CD4-positive, alpha-beta T cell (primary cell): ENCODE measurements at regions of chr22 and their contacts with region 1.

Region 1: DNA sequence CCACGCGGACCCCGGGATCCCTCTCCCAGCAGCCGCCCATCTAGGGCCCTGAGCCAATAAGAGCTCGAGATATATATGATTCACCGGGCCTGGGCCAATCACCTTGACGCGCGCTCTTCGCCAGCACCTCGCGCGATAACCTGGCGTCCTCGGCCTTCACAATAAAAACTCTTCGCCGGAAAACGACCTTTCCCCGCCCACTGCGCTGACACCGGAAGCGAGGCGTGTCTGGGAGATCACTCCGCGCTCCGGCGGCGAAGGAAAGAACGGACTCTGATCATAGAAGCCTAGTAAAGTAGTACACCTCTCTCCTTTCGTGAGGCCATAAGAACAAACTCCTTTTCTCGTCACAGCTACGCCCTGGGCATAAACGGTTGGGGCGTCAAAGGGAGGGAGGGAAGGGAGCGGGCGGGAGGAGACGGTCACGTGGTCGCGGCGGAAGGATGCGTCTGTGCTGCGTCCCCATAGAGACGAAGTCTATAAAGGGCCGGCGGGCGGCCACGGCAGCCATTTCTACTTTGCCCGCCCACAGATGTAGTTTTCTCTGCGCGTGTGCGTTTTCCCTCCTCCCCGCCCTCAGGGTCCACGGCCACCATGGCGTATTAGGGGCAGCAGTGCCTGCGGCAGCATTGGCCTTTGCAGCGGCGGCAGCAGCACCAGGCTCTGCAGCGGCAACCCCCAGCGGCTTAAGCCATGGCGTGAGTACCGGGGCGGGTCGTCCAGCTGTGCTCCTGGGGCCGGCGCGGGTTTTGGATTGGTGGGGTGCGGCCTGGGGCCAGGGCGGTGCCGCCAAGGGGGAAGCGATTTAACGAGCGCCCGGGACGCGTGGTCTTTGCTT is at the start of gene ATF4:
- DNase-seq: peak; percentile 93 to 99 (median 94)
- ATAC-seq: peak; percentile 91
- H3K4me3 ChIP-seq: peak within 1 kb of the TSS; percentile 100
- H3K4me3 Mint-ChIP-seq: peak within 1 kb of the TSS; percentile 97
- H3K27ac ChIP-seq: peak within 1 kb of the TSS; percentile 92 to 95
- H3K27ac Mint-ChIP-seq: peak within 1 kb of the TSS; percentile 98
- H3K4me1 ChIP-seq: peaks cover 52% of the 10 kb centered on the region
- H3K4me1 Mint-ChIP-seq: peaks cover 57% of the 10 kb centered on the region
- H3K27me3 ChIP-seq: no peaks in the 10 kb centered on the region
- H3K27me3 Mint-ChIP-seq: peaks cover 5% of the 10 kb centered on the region
- CTCF ChIP-seq: no peak
- total RNA-seq, gene ATF4: 358 to 365 TPM

Region 2: DNA sequence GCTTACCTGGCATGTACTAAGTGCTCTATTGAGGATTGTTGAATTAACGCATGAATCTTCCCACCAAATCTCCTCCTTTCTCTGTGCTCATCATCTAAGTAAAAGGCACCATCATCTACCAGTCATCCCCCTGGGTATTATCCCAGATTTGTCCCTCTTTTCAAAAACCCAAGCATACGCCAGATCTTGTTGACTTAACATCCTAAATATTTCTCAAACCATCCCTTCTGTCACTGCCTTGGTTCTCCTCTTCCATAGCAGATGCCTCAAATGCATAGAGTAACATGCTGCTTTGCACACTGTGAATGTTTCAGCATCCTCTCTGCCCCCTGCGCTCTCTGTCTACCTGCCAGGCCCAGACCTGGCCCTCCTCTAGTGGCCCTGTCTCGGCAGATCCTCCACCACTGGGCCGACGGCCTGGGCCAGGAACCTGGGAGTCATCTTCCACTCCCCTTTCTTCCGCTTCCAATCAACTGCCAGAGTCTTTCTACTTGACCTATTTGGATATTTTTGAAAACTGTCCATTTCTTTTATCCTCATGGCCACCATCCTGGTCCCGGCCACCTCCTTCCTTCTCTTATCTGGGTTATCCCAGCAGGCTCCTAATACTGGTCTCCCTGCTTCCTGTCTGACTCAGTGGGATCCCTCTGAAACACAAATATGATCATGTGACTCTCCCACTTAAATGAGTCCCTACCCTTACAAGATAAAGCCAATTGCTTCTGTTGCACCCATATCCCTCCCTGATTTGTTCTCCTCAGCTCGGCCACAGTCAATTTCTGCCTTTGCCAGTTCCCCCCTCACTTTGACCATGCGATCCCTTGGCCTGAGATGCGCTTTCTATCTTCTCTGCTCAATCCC is 124.1 kb before region 1 on chr22:
- CTCF ChIA-PET with region 1: no interaction called
- POLR2A ChIA-PET with region 1: interaction called, 12 read pairs
- intact Hi-C with region 1: loop called in 1 of 2 experiments (anchors 2 kb)
- DNase-seq: no peak
- ATAC-seq: no peak
- H3K4me3 ChIP-seq: no peak overlapping the region
- H3K4me3 Mint-ChIP-seq: peak overlapping the region; percentile 17
- H3K27ac ChIP-seq: no peak overlapping the region
- H3K27ac Mint-ChIP-seq: no peak overlapping the region
- H3K4me1 ChIP-seq: peaks cover 19% of the 10 kb centered on the region
- H3K4me1 Mint-ChIP-seq: peaks cover 18% of the 10 kb centered on the region
- H3K27me3 ChIP-seq: no peaks in the 10 kb centered on the region
- H3K27me3 Mint-ChIP-seq: no peaks in the 10 kb centered on the region
- CTCF ChIP-seq: no peak

Region 3: GRCh38 chr22:39414886-39415285 is 105.4 kb before region 1 on chr22:
- CTCF ChIA-PET with region 1: no interaction called
- POLR2A ChIA-PET with region 1: interaction called, 14 read pairs
- intact Hi-C with region 1: no loop called
- DNase-seq: no peak
- ATAC-seq: no peak
- H3K4me3 ChIP-seq: no peak overlapping the region
- H3K4me3 Mint-ChIP-seq: peak overlapping the region; percentile 69
- H3K27ac ChIP-seq: no peak overlapping the region
- H3K27ac Mint-ChIP-seq: peak overlapping the region; percentile 87
- H3K4me1 ChIP-seq: peaks cover 53% of the 10 kb centered on the region
- H3K4me1 Mint-ChIP-seq: peaks cover 62% of the 10 kb centered on the region
- H3K27me3 ChIP-seq: no peaks in the 10 kb centered on the region
- H3K27me3 Mint-ChIP-seq: no peaks in the 10 kb centered on the region
- CTCF ChIP-seq: no peak

Region 4: GRCh38 chr22:39490135-39490798 is 30.0 kb before region 1 on chr22:
- CTCF ChIA-PET with region 1: no interaction called
- POLR2A ChIA-PET with region 1: interaction called, 18 read pairs
- intact Hi-C with region 1: no loop called
- DNase-seq: peak; percentile 52 to 91 (median 76)
- ATAC-seq: peak; percentile 100
- H3K4me3 ChIP-seq: no peak overlapping the region
- H3K4me3 Mint-ChIP-seq: no peak overlapping the region
- H3K27ac ChIP-seq: no peak overlapping the region
- H3K27ac Mint-ChIP-seq: no peak overlapping the region
- H3K4me1 ChIP-seq: peaks cover 18% of the 10 kb centered on the region
- H3K4me1 Mint-ChIP-seq: peaks cover 12% of the 10 kb centered on the region
- H3K27me3 ChIP-seq: no peaks in the 10 kb centered on the region
- H3K27me3 Mint-ChIP-seq: no peaks in the 10 kb centered on the region
- CTCF ChIP-seq: no peak

Region 5: DNA sequence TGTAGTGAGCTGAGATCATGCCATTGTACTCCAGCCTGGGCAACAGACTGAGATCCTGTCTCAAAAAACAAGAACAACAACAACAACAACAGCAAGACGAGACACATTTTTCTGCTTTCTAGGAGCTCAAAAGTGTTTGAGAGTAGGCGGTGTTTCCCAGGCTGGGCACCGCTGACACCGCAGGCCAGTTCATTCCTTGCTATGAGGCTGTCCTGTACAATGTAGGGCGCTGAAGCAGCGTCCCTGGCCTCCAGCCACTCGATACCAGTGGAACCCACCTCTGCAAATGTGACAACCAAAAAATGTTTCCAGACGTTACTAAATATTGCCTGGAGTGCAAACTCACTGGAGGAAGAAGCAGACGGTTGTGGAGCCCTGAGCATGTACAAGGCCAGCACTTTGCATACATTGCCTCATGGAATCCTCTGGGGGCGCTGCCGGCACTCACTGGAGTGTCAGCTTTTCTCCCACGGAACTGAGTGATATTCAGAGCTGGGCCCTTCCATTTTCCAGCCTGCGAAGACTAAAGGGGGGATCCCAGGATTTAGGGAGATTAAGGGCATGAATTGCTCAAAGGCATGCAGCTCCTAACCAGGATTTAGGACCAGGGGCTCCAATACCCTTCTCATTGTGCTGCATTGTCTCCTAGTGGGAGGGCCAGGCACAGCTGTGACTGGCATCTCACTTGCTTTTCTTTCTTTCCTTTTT is 24.0 kb before region 1 on chr22:
- CTCF ChIA-PET with region 1: interaction called, 11 read pairs
- POLR2A ChIA-PET with region 1: interaction called, 69 read pairs
- intact Hi-C with region 1: no loop called
- DNase-seq: peak in 12 of 14 experiments; percentile 29 to 75 (median 48)
- ATAC-seq: peak; percentile 77
- H3K4me3 ChIP-seq: no peak overlapping the region
- H3K4me3 Mint-ChIP-seq: no peak overlapping the region
- H3K27ac ChIP-seq: no peak overlapping the region
- H3K27ac Mint-ChIP-seq: no peak overlapping the region
- H3K4me1 ChIP-seq: peaks cover 14% of the 10 kb centered on the region
- H3K4me1 Mint-ChIP-seq: peaks cover 11% of the 10 kb centered on the region
- H3K27me3 ChIP-seq: no peaks in the 10 kb centered on the region
- H3K27me3 Mint-ChIP-seq: no peaks in the 10 kb centered on the region
- CTCF ChIP-seq: peak; percentile 72

Region 6: DNA sequence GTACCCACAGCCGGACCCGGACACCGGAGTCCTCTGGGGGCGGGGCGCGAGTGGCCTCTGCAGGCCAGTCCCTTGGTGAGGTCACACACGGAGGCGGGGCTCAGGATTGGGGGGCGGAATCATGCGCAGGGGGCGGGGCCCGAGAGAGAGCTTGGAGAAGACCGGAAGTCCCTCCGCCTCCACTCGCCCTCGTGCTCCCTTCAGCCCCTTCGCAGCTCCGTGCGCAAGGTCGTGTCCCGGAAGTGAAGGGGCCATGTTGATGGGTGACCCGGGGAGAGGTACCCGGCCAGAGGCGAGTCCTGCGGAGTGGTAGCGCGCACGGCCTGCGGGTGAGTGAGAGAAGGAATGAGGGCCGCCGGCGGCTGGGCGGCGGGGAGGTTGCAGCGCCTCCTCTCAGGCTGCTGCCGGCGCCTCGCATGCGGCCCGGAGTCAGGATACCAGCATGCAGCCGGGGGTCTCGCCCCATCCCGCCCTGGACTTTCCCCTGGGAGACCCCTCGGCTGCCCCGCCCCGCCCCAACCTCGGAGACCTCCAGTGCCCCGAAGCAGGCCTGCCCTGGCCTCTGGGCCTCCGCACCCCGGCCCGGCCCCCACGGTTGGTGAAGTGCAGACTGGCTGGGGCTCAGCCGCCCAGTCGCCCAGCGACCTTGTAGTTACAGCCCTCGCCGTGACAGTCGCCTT is 18.0 kb before region 1 on chr22 and contains the start of gene MIEF1:
- CTCF ChIA-PET with region 1: no interaction called
- POLR2A ChIA-PET with region 1: interaction called, 69 read pairs
- intact Hi-C with region 1: loop called in 1 of 2 experiments (anchors 1 kb)
- DNase-seq: peak; percentile 70 to 96 (median 86)
- ATAC-seq: peak; percentile 94
- H3K4me3 ChIP-seq: peak within 1 kb of the TSS; percentile 67
- H3K4me3 Mint-ChIP-seq: peak within 1 kb of the TSS; percentile 99
- H3K27ac ChIP-seq: peak within 1 kb of the TSS; percentile 61 to 71
- H3K27ac Mint-ChIP-seq: peak within 1 kb of the TSS; percentile 92
- H3K4me1 ChIP-seq: peaks cover 39% of the 10 kb centered on the region
- H3K4me1 Mint-ChIP-seq: peaks cover 47% of the 10 kb centered on the region
- H3K27me3 ChIP-seq: no peaks in the 10 kb centered on the region
- H3K27me3 Mint-ChIP-seq: no peaks in the 10 kb centered on the region
- CTCF ChIP-seq: no peak
- total RNA-seq, gene MIEF1: 19.8 to 20.4 TPM